Activated CD4-positive, alpha-beta T cell treated with anti-CD3 and anti-CD28 coated beads for 36 hours (primary cell): ENCODE measurements at regions of chr1 and their contacts with region 1.

Region 1: DNA sequence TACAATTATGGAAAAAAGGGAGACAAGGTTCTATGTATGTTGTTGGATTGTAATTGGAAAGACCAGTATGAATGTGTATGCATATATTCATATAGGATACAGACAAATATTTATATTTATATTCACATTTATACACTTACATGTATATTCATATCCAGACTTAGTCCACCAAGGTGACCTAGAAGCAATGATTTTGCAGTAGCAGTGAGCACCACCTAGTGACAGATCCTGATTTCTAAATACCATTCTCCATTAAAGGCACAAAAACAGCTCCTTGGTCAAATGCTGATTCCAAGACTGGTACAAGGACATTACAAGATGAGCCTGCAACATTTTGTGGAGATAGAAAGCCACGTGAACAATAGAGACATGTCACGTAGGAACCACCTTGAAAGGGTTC is 153.4 kb downstream of the SDCCAG8 start:
- DNase-seq: no peak
- ATAC-seq: no peak
- H3K4me3 Mint-ChIP-seq: no peak overlapping the region
- H3K27ac Mint-ChIP-seq: no peak overlapping the region
- H3K4me1 Mint-ChIP-seq: peaks cover 24% of the 10 kb centered on the region
- H3K27me3 Mint-ChIP-seq: no peaks in the 10 kb centered on the region

Region 2: GRCh38 chr1:243748706-243749283 is 339.5 kb after region 1 on chr1:
- CTCF ChIA-PET with region 1: no interaction called
- POLR2A ChIA-PET with region 1: no interaction called
- intact Hi-C with region 1: loop called in 1 of 2 experiments (anchors 10 kb)
- DNase-seq: no peak
- ATAC-seq: peak; percentile 98
- H3K4me3 Mint-ChIP-seq: no peak overlapping the region
- H3K27ac Mint-ChIP-seq: no peak overlapping the region
- H3K4me1 Mint-ChIP-seq: peaks cover 28% of the 10 kb centered on the region
- H3K27me3 Mint-ChIP-seq: no peaks in the 10 kb centered on the region